CD4-positive, alpha-beta memory T cell (primary cell): ENCODE measurements at regions of chr14 and their contacts with region 1.

Region 1: GRCh38 chr14:50003213-50004031 is 110.5 kb downstream of the ARF6 start:
- DNase-seq: peak; percentile 76 to 87 (median 79)
- H3K4me3 ChIP-seq: peak overlapping the region; percentile 65 to 69
- H3K4me3 Mint-ChIP-seq: peak overlapping the region; percentile 83 to 96 (median 87)
- H3K27ac ChIP-seq: peak overlapping the region; percentile 94
- H3K27ac Mint-ChIP-seq: peak overlapping the region; percentile 96 to 99 (median 98)
- H3K4me1 ChIP-seq: peaks cover 57% of the 10 kb centered on the region
- H3K4me1 Mint-ChIP-seq: peaks cover 43 to 64% (median 52%) of the 10 kb centered on the region in 4 donors
- H3K27me3 ChIP-seq: no peaks in the 10 kb centered on the region
- H3K27me3 Mint-ChIP-seq: no peaks in the 10 kb centered on the region

Region 2: GRCh38 chr14:49867831-49868723 is 135.3 kb before region 1 on chr14:
- CTCF ChIA-PET with region 1: interaction called, 182 read pairs
- POLR2A ChIA-PET with region 1: interaction called, 321 read pairs
- intact Hi-C with region 1: loop called (anchors 1 kb)
- DNase-seq: peak; percentile 92 to 98 (median 96)
- H3K4me3 ChIP-seq: peak overlapping the region; percentile 47 to 54
- H3K4me3 Mint-ChIP-seq: peak overlapping the region; percentile 88 to 96 (median 92)
- H3K27ac ChIP-seq: peak overlapping the region; percentile 92
- H3K27ac Mint-ChIP-seq: peak overlapping the region; percentile 88 to 99 (median 98)
- H3K4me1 ChIP-seq: peaks cover 45% of the 10 kb centered on the region
- H3K4me1 Mint-ChIP-seq: peaks cover 12 to 21% (median 14%) of the 10 kb centered on the region in 4 donors
- H3K27me3 ChIP-seq: no peaks in the 10 kb centered on the region
- H3K27me3 Mint-ChIP-seq: no peaks in the 10 kb centered on the region

Region 3: DNA sequence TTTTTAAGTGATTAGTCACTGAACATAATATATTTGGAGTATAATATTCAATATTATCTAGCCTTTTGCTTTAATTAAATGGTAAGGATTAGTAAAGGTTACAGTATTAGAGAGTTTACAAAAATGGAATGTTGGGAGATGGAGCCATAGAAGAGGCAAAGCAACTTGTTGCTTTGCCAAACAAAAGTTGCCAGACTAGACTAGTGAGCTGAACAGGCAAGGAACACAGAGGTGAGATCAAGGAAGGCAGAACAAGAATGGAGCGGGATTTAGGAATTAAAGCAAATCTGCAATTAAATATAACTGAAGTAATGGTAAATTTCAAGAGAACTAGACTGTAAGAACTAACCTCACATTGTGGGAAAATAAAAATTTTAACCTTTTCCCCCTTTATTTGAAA is 105.5 kb before region 1 on chr14:
- CTCF ChIA-PET with region 1: interaction called, 13 read pairs
- POLR2A ChIA-PET with region 1: interaction called, 136 read pairs
- intact Hi-C with region 1: no loop called
- DNase-seq: no peak
- H3K4me3 ChIP-seq: peak overlapping the region; percentile 33 to 58
- H3K4me3 Mint-ChIP-seq: peak overlapping the region; percentile 65 to 99 (median 84)
- H3K27ac ChIP-seq: peak overlapping the region; percentile 98
- H3K27ac Mint-ChIP-seq: peak overlapping the region; percentile 85 to 97 (median 94)
- H3K4me1 ChIP-seq: peaks cover 42% of the 10 kb centered on the region
- H3K4me1 Mint-ChIP-seq: peaks cover 21 to 62% (median 36%) of the 10 kb centered on the region in 4 donors
- H3K27me3 ChIP-seq: no peaks in the 10 kb centered on the region
- H3K27me3 Mint-ChIP-seq: no peaks in the 10 kb centered on the region

Region 4: GRCh38 chr14:49946320-49947141 is 56.9 kb before region 1 on chr14:
- CTCF ChIA-PET with region 1: interaction called, 20 read pairs
- POLR2A ChIA-PET with region 1: interaction called, 130 read pairs
- intact Hi-C with region 1: loop called (anchors 1 kb)
- DNase-seq: peak; percentile 40 to 67 (median 41)
- H3K4me3 ChIP-seq: peak overlapping the region in 1 of 2 donors; percentile 11
- H3K4me3 Mint-ChIP-seq: peak overlapping the region; percentile 1 to 78 (median 67)
- H3K27ac ChIP-seq: peak overlapping the region; percentile 64
- H3K27ac Mint-ChIP-seq: peak overlapping the region; percentile 90 to 97 (median 94)
- H3K4me1 ChIP-seq: peaks cover 69% of the 10 kb centered on the region
- H3K4me1 Mint-ChIP-seq: peaks cover 59 to 91% (median 72%) of the 10 kb centered on the region in 4 donors
- H3K27me3 ChIP-seq: no peaks in the 10 kb centered on the region
- H3K27me3 Mint-ChIP-seq: no peaks in the 10 kb centered on the region

Region 5: GRCh38 chr14:49992901-49993335 is 10.5 kb before region 1 on chr14:
- CTCF ChIA-PET with region 1: interaction called, 6 read pairs
- POLR2A ChIA-PET with region 1: interaction called, 486 read pairs
- intact Hi-C with region 1: no loop called
- DNase-seq: no peak
- H3K4me3 ChIP-seq: no peak overlapping the region
- H3K4me3 Mint-ChIP-seq: no peak overlapping the region
- H3K27ac ChIP-seq: no peak overlapping the region
- H3K27ac Mint-ChIP-seq: peak overlapping the region in 1 of 7 donors; percentile 26
- H3K4me1 ChIP-seq: peaks cover 8% of the 10 kb centered on the region
- H3K4me1 Mint-ChIP-seq: peaks cover 13 to 44% (median 20%) of the 10 kb centered on the region in 4 donors
- H3K27me3 ChIP-seq: no peaks in the 10 kb centered on the region
- H3K27me3 Mint-ChIP-seq: no peaks in the 10 kb centered on the region

Region 6: DNA sequence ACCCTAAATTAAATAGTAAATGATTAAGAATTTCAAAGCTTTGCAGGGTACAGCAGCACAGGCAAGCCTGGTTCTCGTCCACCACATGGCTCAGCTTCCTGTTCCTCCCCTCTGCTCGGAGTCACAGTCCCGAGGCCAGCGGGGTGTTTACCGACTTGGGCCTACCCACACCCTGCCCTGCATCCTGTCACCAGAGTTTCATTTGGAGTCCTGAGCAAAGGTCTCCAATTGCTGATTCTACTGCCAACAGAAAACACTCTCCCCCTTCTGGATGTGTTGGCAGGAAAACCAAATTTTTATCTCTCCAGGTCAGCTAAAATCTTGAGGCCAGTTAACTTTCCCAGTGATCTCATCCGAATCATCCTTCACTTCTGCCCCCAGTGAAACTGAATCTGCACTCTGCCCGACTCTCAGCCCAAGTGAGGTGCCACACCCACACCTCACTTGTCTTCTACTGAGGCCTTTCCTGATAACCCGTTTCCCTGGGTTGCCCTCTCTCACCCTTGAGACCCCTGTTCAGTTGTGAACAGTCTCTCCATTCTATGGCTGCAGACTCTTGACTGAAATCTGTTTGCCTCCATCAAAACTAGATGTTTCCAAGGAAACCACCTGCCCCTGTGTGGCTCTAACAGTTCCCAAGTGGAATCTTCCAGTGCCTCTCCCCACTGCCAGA is 41.8 kb after region 1 on chr14:
- CTCF ChIA-PET with region 1: interaction called, 27 read pairs
- POLR2A ChIA-PET with region 1: interaction called, 293 read pairs
- intact Hi-C with region 1: loop called (anchors 1 kb)
- DNase-seq: peak; percentile 59 to 79 (median 71)
- H3K4me3 ChIP-seq: peak overlapping the region in 1 of 2 donors; percentile 12
- H3K4me3 Mint-ChIP-seq: peak overlapping the region; percentile 28 to 89 (median 66)
- H3K27ac ChIP-seq: peak overlapping the region; percentile 64
- H3K27ac Mint-ChIP-seq: peak overlapping the region; percentile 89 to 97 (median 94)
- H3K4me1 ChIP-seq: peaks cover 75% of the 10 kb centered on the region
- H3K4me1 Mint-ChIP-seq: peaks cover 56 to 85% (median 71%) of the 10 kb centered on the region in 4 donors
- H3K27me3 ChIP-seq: no peaks in the 10 kb centered on the region
- H3K27me3 Mint-ChIP-seq: no peaks in the 10 kb centered on the region

Region 7: GRCh38 chr14:50109342-50109741 is 105.9 kb after region 1 on chr14:
- CTCF ChIA-PET with region 1: interaction called, 14 read pairs
- POLR2A ChIA-PET with region 1: interaction called, 19 read pairs
- intact Hi-C with region 1: loop called (anchors 1 kb)
- DNase-seq: no peak
- H3K4me3 ChIP-seq: no peak overlapping the region
- H3K4me3 Mint-ChIP-seq: no peak overlapping the region
- H3K27ac ChIP-seq: no peak overlapping the region
- H3K27ac Mint-ChIP-seq: peak overlapping the region in 5 of 7 donors; percentile 19 to 56 (median 37)
- H3K4me1 ChIP-seq: peaks cover 15% of the 10 kb centered on the region
- H3K4me1 Mint-ChIP-seq: peaks cover 6 to 25% (median 14%) of the 10 kb centered on the region in 4 donors
- H3K27me3 ChIP-seq: no peaks in the 10 kb centered on the region
- H3K27me3 Mint-ChIP-seq: no peaks in the 10 kb centered on the region

Region 8: GRCh38 chr14:50139192-50139591 is 135.8 kb after region 1 on chr14:
- CTCF ChIA-PET with region 1: no interaction called
- POLR2A ChIA-PET with region 1: no interaction called
- intact Hi-C with region 1: no loop called
- DNase-seq: no peak
- H3K4me3 ChIP-seq: no peak overlapping the region
- H3K4me3 Mint-ChIP-seq: no peak overlapping the region
- H3K27ac ChIP-seq: no peak overlapping the region
- H3K27ac Mint-ChIP-seq: no peak overlapping the region
- H3K4me1 ChIP-seq: no peaks in the 10 kb centered on the region
- H3K4me1 Mint-ChIP-seq: no peaks in the 10 kb centered on the region
- H3K27me3 ChIP-seq: no peaks in the 10 kb centered on the region
- H3K27me3 Mint-ChIP-seq: no peaks in the 10 kb centered on the region